HCT116 (cell line): ENCODE measurements at regions of chr17 and their contacts with region 1.

Region 1: GRCh38 chr17:27654654-27655524 is 23.9 kb downstream of the LGALS9 start:
- DNase-seq: peak; percentile 76
- ATAC-seq: peak; percentile 97
- H3K4me3 ChIP-seq: no peak overlapping the region
- H3K27ac ChIP-seq: peak overlapping the region; percentile 13; the same call in 1 of the 2 replicates
- H3K4me1 ChIP-seq: peaks cover 3 to 6% of the 10 kb centered on the region in 2 experiments; a peak in 2 of 4 replicates
- H3K27me3 ChIP-seq: no peaks in the 10 kb centered on the region
- CTCF ChIP-seq: peak; percentile 88 to 99 (median 99)
- POLR2A ChIP-seq: no peak
- RAD21 ChIP-seq: peak; percentile 78

Region 2: GRCh38 chr17:27245230-27245696 is 409.6 kb before region 1 on chr17:
- CTCF ChIA-PET with region 1: no interaction called
- POLR2A ChIA-PET with region 1: no interaction called
- RAD21 ChIA-PET with region 1: no interaction called
- intact Hi-C with region 1: loop called (anchors 5 kb)
- DNase-seq: peak; percentile 69
- ATAC-seq: peak; percentile 99
- H3K4me3 ChIP-seq: 0 out of 4 replicates have a peak overlapping the region, but pooled peaks of 1 of the 2 experiments have one; percentile 1
- H3K27ac ChIP-seq: no peak overlapping the region
- H3K4me1 ChIP-seq: peaks cover 22 to 39% of the 10 kb centered on the region in 2 experiments
- H3K27me3 ChIP-seq: no peaks in the 10 kb centered on the region
- CTCF ChIP-seq: peak; percentile 60 to 92 (median 73)
- POLR2A ChIP-seq: no peak
- RAD21 ChIP-seq: peak; percentile 98

Region 3: DNA sequence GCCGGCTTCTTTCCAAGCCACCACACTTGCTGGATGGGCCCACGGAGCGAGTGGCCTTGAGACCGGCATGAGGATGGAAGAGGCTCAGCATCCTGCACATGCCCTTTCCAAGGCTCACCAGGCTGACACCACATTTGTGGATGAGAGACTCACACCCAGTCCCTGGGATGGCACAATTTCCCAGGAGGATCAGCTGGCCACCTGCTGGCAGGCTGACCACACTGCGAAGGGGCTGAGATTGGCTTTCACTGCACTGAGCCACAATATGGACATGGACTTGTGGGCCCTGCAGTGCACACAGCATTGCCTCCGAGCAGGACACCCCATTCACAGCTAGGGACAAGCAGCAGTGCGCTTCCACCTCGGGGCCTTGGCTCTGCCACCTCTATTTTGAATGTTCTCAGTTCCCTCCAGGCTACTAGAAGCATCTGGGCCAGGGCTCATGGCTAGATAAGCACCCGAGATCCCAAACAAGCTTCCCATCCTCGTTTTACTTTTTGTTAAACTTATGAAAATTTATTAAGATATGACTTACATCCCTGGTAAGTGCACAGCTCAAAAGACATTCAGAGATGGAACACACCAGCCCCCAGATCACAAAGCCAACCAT is 223.9 kb before region 1 on chr17:
- CTCF ChIA-PET with region 1: no interaction called
- POLR2A ChIA-PET with region 1: no interaction called
- RAD21 ChIA-PET with region 1: no interaction called
- intact Hi-C with region 1: no loop called
- DNase-seq: peak; percentile 28
- ATAC-seq: peak; percentile 99
- H3K4me3 ChIP-seq: no peak overlapping the region
- H3K27ac ChIP-seq: no peak overlapping the region
- H3K4me1 ChIP-seq: no peaks in the 10 kb centered on the region
- H3K27me3 ChIP-seq: no peaks in the 10 kb centered on the region
- CTCF ChIP-seq: peak; percentile 59 to 81 (median 66); a peak in 5 of 6 replicates
- POLR2A ChIP-seq: no peak
- RAD21 ChIP-seq: peak; percentile 66

Region 4: DNA sequence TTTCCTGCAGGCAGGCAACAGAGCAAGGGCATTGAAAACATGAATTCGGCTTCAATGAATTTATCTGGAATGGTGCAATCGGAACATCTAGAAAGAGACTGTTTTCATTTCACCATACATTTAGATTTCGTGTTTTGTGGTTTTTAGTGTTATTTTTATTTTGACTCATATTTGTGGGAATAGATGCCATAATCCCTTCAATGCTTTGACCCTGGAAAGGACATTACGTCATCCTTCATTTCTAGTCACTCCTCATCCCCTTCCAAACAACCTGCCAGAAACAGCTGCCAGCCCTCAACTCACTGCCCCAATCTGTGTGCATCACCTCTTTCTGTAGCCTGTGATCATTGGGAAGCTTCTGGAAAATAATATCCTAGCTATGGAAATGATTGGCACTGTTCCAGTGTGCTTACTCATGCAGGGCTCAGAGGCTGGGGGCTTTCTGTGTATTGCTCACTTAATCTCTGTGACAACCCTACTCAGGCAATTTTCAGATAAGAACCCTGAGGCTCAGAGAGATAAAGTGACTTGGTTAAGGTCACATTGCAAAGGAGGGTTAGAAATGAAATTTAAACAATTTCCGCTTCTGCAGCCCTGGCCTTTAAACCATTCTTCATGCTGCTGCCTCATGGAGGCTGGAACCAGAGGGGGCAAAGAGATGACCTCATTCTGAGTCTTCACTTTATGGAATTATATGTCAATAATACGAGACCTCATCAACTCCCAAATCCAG is 208.2 kb before region 1 on chr17:
- CTCF ChIA-PET with region 1: no interaction called
- POLR2A ChIA-PET with region 1: no interaction called
- RAD21 ChIA-PET with region 1: no interaction called
- intact Hi-C with region 1: no loop called
- DNase-seq: no peak
- ATAC-seq: no peak
- H3K4me3 ChIP-seq: no peak overlapping the region
- H3K27ac ChIP-seq: no peak overlapping the region
- H3K4me1 ChIP-seq: peaks cover 0 to 4% of the 10 kb centered on the region in 2 experiments; a peak in 1 of 4 replicates
- H3K27me3 ChIP-seq: no peaks in the 10 kb centered on the region
- CTCF ChIP-seq: no peak
- POLR2A ChIP-seq: no peak
- RAD21 ChIP-seq: no peak

Region 5: GRCh38 chr17:27466743-27467375 is 188.0 kb before region 1 on chr17:
- CTCF ChIA-PET with region 1: no interaction called
- POLR2A ChIA-PET with region 1: no interaction called
- RAD21 ChIA-PET with region 1: interaction called in 1 of 2 experiments, 12 read pairs
- intact Hi-C with region 1: no loop called
- DNase-seq: no peak
- ATAC-seq: no peak
- H3K4me3 ChIP-seq: no peak overlapping the region
- H3K27ac ChIP-seq: no peak overlapping the region
- H3K4me1 ChIP-seq: peaks cover 9 to 14% of the 10 kb centered on the region in 2 experiments
- H3K27me3 ChIP-seq: no peaks in the 10 kb centered on the region
- CTCF ChIP-seq: no peak
- POLR2A ChIP-seq: no peak
- RAD21 ChIP-seq: no peak

Region 6: DNA sequence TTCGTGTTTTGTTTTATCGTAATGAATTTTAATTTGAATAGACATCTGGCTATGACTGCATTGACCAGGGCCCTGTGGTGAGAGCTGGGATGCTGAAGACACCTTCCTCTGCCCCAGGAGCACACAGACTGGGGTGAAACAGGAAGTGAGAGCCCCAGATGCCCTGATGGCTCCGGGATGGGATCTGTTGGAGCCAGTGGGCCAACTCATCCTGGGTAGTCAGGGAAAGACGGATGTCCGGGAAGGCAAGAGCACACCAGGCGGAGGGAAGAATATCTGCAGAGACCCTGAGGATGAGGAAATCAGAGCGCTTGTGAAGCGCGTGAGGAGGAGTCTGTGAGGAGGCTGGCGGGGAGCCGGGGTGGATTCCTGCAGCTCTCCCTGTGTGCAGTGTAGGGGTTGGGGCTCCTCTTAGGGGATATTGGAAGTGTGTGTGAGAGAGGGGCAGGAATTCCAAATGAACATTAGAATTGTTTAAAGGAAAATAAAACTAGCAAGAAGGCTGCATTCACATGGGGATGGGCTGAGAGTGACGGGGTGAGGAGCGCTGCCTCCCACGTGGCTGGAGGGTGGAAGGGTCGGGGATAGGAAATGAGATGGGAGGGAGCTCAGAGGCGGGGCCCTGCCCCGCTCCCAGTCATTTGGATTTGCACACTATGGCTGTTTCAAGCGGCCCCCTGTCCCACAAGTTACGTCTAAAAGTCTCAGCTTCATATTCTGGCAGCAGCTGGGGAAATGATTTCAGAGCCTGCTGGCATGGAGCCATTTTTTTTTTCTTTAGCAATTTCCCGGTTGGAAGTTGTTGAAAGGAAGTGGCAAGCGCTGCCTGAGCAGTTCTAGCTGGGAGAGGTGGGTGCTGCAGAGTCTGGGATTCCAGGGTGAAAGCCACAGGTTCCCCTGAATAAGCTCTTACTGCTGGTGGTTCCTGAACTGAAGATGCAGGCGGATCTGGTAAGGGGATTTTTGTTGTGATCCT is 95.1 kb before region 1 on chr17:
- CTCF ChIA-PET with region 1: no interaction called
- POLR2A ChIA-PET with region 1: no interaction called
- RAD21 ChIA-PET with region 1: no interaction called
- intact Hi-C with region 1: no loop called
- DNase-seq: no peak
- ATAC-seq: no peak
- H3K4me3 ChIP-seq: no peak overlapping the region
- H3K27ac ChIP-seq: no peak overlapping the region
- H3K4me1 ChIP-seq: peaks cover 11 to 21% of the 10 kb centered on the region in 2 experiments
- H3K27me3 ChIP-seq: no peaks in the 10 kb centered on the region
- CTCF ChIP-seq: no peak
- POLR2A ChIP-seq: no peak
- RAD21 ChIP-seq: no peak

Region 7: DNA sequence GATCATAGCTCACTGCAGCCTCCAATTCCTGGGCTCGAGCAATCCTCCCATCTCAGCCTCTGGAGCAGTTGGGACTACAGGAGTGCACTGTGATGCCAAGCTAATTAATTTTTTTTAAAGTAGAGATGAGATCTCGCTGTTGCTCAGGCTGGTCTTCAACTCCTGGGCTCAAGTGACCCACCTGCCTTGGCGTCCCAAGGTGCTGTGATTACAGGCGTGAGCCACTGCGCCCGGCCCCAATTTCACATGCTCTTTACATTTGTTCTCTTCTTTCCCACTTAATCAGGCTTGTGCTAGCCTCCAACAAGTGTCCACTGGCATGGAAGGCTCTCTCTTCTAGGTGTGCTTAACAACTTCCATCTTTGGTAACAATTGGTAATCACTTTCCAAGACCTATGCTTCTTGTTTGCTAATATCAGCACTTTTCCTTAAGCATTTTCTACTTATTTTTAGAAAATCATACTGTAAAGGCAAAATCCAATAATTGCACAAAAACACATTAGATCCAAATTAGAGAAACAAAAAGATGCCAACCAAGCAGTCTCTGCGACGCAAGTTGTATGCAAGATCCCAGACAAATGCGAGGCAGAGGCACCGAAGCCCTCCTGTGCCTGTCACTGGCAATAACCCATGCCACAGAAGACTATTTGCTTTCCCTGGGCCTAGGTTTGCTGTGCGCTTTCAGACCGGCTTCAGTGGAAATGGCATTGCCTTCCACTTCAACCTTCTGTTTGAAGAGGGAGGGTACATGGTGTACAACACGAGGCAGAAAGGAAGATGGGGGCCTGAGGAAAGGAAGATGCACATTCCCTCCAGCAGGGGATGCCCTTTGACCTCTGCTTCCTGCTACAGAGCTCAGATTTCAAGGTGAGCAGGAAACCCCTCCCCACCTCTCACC is 92.8 kb after region 1 on chr17:
- CTCF ChIA-PET with region 1: interaction called, 26 read pairs
- POLR2A ChIA-PET with region 1: no interaction called
- RAD21 ChIA-PET with region 1: no interaction called
- intact Hi-C with region 1: no loop called
- DNase-seq: peak; percentile 23
- ATAC-seq: peak; percentile 76
- H3K4me3 ChIP-seq: no peak overlapping the region
- H3K27ac ChIP-seq: no peak overlapping the region
- H3K4me1 ChIP-seq: peaks cover 0 to 4% of the 10 kb centered on the region in 2 experiments; a peak in 1 of 4 replicates
- H3K27me3 ChIP-seq: no peaks in the 10 kb centered on the region
- CTCF ChIP-seq: peak in 2 of 3 experiments; percentile 65 to 71; a peak in 4 of 6 replicates
- POLR2A ChIP-seq: no peak
- RAD21 ChIP-seq: no peak

Region 8: GRCh38 chr17:27879987-27880608 is 225.2 kb after region 1 on chr17:
- CTCF ChIA-PET with region 1: interaction called, 30 read pairs
- POLR2A ChIA-PET with region 1: no interaction called
- RAD21 ChIA-PET with region 1: interaction called in 1 of 2 experiments, 3 read pairs
- intact Hi-C with region 1: loop called (anchors 2 kb)
- DNase-seq: no peak
- ATAC-seq: peak; percentile 99
- H3K4me3 ChIP-seq: no peak overlapping the region
- H3K27ac ChIP-seq: no peak overlapping the region
- H3K4me1 ChIP-seq: no peaks in the 10 kb centered on the region
- H3K27me3 ChIP-seq: no peaks in the 10 kb centered on the region
- CTCF ChIP-seq: peak; percentile 83 to 92 (median 85)
- POLR2A ChIP-seq: no peak
- RAD21 ChIP-seq: peak; percentile 88